ENCODE measurements at regions of chr9 and their contacts with region 1.

Region 1: DNA sequence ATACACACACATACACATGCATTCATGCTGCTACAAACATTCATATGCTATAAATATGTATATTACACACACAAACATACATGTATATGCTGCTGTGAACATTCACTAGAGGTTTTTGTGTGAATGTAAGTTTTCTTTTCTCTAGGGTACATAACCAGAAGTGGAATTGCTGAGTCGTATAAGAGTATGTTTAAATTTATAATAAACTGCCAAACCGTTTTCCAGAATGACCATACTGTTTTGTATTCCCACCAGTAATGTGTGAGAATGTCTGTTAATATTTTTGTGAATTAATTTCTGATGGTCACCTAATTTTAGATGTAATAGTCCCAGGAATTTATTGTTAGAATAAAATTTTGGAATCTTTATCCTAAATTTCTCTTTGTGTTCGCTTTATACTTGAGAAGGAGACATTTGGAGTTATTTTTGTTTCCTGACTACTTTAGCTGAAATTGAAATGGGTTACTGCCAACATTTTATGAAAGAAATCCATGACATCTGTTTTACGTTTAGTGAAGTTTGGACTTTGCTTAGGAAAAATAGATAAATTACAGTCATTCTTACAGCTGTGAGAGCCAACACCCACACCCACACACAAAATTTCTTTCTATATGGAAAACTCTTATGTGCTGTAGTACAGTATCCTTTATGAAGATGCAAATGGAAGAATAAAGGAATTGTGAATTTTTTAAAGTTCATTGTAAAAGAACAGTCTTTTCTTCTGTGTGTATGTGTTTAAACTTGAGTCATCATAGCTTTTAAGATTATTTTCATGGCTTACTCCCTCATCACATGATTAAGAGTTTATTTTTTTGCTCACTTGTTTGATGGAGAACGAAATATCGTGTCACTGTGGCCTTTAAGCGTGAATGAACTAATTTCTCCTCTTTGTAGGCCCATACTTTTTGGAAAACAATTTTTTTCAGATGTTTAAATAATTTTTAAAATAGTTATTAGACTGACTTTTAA is 24.3 kb downstream of the CENPP start:
- DNase-seq: no peak
- ATAC-seq: no peak
- H3K4me3 ChIP-seq: no peak overlapping the region
- H3K27ac ChIP-seq: peak overlapping the region in 2 of 4 donors; percentile 37 to 51
- H3K4me1 ChIP-seq: peaks cover 0 to 3% of the 10 kb centered on the region in 2 donors
- H3K27me3 ChIP-seq: no peaks in the 10 kb centered on the region
- CTCF ChIP-seq: no peak
- POLR2A ChIP-seq: no peak

Region 2: DNA sequence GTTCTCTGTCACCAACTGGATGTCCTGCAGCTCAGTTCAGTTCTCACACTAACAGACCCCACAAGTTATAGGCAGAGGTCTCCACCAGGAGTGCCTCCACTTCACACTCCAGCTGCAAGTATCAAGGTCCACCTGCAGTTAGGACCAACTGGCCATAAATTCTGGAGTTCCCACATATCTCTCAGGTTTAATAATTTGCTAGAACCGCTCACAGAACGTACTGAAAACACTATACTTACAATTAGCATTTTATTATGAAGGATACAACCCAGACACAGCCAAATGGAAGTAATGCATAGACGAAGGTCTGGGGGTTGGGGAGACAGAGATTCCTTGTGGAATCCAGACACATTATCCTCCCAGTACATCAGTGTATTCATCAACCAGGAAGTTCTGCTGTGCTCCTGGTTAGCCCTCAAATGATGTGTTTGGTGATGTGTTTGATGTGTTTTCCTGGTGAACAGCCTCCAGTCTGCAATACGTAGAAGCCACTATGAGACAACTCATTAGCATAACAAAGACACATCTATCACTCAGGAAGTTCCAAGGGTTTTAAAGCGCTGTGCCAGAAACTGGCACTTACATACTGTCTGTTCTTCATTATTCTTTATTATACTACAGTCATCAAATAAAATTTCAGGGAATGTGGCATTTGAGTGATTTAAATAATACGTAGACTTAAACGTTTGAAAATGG is 29.0 kb after region 1 on chr9:
- in situ Hi-C with region 1: no loop called
- intact Hi-C with region 1: no loop called
- DNase-seq: no peak
- ATAC-seq: no peak
- H3K4me3 ChIP-seq: no peak overlapping the region
- H3K27ac ChIP-seq: no peak overlapping the region
- H3K4me1 ChIP-seq: no peaks in the 10 kb centered on the region
- H3K27me3 ChIP-seq: no peaks in the 10 kb centered on the region
- CTCF ChIP-seq: no peak
- POLR2A ChIP-seq: no peak

Region 3: DNA sequence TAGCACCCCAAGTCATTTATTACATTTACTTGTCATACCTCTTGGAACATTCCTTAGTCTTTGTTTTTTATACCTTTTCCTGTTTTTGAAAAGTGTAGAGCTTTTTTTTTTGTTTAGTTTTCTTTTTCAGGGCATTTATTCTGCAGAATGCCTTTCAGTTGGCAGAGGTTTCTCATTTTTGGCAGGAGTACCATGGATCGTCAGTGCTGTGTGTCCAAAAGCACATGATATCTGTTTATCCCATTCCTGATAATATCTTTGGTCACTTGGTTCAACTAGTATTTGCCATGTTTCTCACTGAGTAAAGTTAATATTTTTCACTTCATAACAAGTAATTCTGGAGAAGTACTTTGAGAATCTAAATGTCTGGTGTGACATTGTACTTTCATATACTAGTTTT is 43.6 kb after region 1 on chr9:
- in situ Hi-C with region 1: no loop called
- intact Hi-C with region 1: loop called (anchors 5 kb)
- DNase-seq: no peak
- ATAC-seq: no peak
- H3K4me3 ChIP-seq: no peak overlapping the region
- H3K27ac ChIP-seq: no peak overlapping the region
- H3K4me1 ChIP-seq: peaks cover 0 to 11% of the 10 kb centered on the region in 2 donors
- H3K27me3 ChIP-seq: no peaks in the 10 kb centered on the region
- CTCF ChIP-seq: no peak
- POLR2A ChIP-seq: no peak

Region 4: DNA sequence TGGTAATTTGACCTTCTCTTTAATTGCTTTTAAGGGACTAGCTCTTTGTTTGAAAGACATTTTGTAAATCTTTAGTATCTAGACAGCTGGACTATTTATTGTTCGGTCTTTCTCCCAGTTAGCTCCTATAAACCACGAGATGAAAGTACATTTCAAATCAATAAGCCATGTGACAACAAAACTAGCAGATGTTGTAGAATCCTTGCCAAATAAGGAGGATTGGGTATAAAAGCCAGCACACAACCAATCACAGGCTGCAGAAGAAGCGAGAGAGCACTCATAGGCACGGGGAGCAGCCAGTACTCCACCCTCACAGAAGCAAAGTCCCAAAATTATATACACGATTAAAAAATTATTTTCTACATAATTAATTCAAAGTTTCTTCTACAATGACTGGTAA is 82.3 kb after region 1 on chr9:
- in situ Hi-C with region 1: loop called in 1 of 4 experiments (anchors 5 kb)
- intact Hi-C with region 1: loop called (anchors 10 kb)
- DNase-seq: no peak
- ATAC-seq: no peak
- H3K4me3 ChIP-seq: no peak overlapping the region
- H3K27ac ChIP-seq: no peak overlapping the region
- H3K4me1 ChIP-seq: no peaks in the 10 kb centered on the region
- H3K27me3 ChIP-seq: no peaks in the 10 kb centered on the region
- CTCF ChIP-seq: no peak
- POLR2A ChIP-seq: no peak